Activated CD4-positive, alpha-beta T cell treated with anti-CD3 and anti-CD28 coated beads for 36 hours (primary cell): ENCODE measurements at regions of chr18 and their contacts with region 1.

Region 1: DNA sequence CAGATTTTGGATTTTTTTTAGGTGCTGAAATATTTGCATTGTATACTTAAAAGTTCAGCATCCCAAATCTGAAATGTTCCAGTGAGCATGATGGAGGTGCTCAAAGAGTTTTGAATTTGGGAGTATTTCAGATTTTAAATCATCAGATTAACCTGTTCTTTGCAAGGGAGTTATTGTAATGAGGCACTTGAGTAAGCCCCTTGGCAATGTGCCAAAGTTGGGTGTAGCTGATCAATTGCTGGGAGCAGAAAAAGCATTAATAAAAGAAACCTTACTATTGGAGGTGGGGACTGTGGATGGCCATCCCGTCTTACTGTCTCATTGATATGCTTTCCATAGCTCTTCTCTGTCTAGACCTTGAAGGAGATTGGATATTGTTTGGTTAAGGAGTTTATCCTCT is 28.3 kb downstream of the MALT1 start:
- DNase-seq: peak; percentile 39
- ATAC-seq: no peak
- H3K4me3 Mint-ChIP-seq: no peak overlapping the region
- H3K27ac Mint-ChIP-seq: no peak overlapping the region
- H3K4me1 Mint-ChIP-seq: peaks cover 33% of the 10 kb centered on the region
- H3K27me3 Mint-ChIP-seq: no peaks in the 10 kb centered on the region

Region 2: DNA sequence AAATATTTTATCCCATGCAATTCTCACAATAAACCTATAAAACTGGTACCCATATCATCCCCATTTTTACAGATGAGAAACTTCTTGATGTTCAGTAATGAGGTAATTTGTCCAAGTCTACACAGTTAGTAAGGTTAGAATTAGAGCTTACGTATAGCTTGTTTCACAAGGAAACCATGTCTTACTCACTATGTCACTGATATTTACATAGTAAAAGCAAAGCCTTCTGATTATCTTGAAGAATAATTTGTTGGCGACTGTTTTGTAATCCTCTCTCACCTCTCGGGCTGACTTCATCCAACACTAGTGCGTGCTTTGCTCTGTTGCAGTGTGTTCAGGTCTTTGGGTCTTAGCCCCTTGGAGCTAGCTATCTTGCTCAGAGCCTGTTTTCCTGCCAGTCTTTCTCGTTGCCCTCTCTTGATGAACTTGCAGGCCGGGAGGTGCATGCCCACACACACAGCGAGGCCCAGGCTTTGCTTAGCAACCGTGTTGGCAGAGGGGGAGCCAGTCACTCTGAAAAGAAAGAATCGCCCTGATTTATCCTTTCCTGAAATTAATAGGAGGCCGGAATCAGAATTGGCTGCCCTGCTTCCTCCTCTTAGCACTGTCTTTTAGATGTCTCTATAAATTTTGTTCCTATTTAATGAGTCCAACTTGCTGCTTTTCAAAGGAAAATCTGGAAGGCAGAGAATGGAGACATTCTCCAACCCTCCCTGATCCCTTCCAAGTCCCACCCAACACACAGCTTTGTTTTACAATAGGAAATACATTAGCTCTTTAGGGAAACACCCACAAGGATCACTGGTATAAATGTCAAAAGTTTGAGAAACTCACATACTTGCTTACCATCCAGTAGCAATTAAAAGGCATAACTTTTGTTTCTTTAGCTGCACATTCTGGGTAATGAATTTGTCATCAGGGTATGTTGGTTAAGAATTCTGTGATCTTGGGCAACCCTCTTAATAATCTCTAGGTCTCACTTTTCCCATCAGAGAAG is 342.6 kb after region 1 on chr18:
- CTCF ChIA-PET with region 1: no interaction called
- POLR2A ChIA-PET with region 1: no interaction called
- intact Hi-C with region 1: loop called in 1 of 2 experiments (anchors 5 kb)
- DNase-seq: no peak
- ATAC-seq: no peak
- H3K4me3 Mint-ChIP-seq: no peak overlapping the region
- H3K27ac Mint-ChIP-seq: no peak overlapping the region
- H3K4me1 Mint-ChIP-seq: peaks cover 21% of the 10 kb centered on the region
- H3K27me3 Mint-ChIP-seq: peaks cover 3% of the 10 kb centered on the region